IMR-90 (cell line): ENCODE measurements at regions of chr2 and their contacts with region 1.

Region 1: GRCh38 chr2:145157741-145158591 is 638.0 kb upstream of the ZEB2 start:
- DNase-seq: peak; percentile 95
- ATAC-seq: peak; percentile 89
- H3K4me3 ChIP-seq: no peak overlapping the region
- H3K27ac ChIP-seq: peak overlapping the region; percentile 52; the same call in 1 of the 2 replicates
- H3K4me1 ChIP-seq: peaks cover 6% of the 10 kb centered on the region; the same call in 1 of the 2 replicates
- H3K27me3 ChIP-seq: no peaks in the 10 kb centered on the region
- CTCF ChIP-seq: no peak
- POLR2A ChIP-seq: no peak
- RAD21 ChIP-seq: no peak

Region 2: DNA sequence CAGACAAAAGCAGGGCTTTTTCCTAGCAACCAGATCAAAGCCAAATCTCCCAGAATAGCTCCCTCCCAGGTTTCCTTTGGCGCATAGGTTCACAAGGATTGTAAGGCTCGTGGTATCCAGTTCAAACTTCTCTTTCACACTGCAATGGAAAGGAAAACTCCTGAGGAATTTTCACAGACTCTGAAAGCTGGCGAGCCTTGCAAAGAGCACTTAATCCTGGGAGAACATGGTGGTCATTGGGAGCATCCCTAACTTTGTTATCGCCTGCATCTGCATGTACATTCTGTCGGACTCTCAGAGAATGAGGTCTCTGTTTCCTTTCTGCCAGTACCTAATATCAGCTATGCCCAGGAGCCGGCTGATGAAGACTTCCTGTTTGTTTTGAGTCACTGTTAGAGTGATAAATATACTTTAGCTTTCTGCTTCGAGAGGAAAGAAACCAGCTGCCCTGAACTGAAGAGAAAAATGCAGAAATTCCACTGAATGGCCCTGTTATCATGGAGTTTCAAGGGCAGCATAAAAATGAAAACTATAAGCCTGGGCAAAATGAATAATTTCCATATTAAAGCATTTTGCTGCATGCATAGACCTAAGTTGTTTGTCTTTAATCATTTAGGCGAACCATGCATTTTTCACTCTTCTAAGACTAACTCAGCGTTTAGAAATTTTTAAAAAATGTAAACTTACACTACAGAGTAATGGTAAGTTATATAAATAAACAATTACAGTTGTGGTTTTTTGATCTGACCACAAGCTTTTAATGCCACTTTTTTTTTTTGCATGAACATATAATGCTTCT is 561.7 kb before region 1 on chr2:
- CTCF ChIA-PET with region 1: no interaction called
- POLR2A ChIA-PET with region 1: no interaction called
- dilution Hi-C with region 1: no loop called
- in situ Hi-C with region 1: no loop called
- intact Hi-C with region 1: loop called (anchors 2 kb)
- DNase-seq: peak; percentile 69
- ATAC-seq: peak; percentile 90
- H3K4me3 ChIP-seq: peak overlapping the region; percentile 8; the same call in 1 of the 2 replicates
- H3K27ac ChIP-seq: peak overlapping the region; percentile 11; the same call in 1 of the 2 replicates
- H3K4me1 ChIP-seq: peaks cover 4% of the 10 kb centered on the region
- H3K27me3 ChIP-seq: peaks cover 33% of the 10 kb centered on the region
- CTCF ChIP-seq: no peak
- POLR2A ChIP-seq: no peak
- RAD21 ChIP-seq: no peak

Region 3: DNA sequence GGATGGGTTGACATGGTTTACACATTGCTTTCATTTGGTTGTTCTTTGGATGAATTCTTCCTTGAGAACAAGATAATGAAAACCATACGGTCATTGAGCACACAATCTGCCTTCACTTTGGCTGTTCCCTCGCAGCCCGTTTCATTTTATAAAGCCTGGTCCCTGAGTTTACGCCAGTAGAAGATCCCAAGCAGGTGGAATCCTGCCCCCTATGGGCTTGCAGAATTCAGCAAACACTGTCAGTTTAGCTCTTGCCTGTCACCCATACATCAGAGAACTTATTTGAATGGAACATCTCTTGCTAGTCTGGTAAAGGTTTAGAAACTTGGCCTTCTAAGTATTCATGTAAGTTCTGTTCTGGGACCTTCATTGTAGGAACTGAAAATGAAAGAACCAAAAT is 28.3 kb after region 1 on chr2:
- CTCF ChIA-PET with region 1: no interaction called
- POLR2A ChIA-PET with region 1: no interaction called
- dilution Hi-C with region 1: no loop called
- in situ Hi-C with region 1: no loop called
- intact Hi-C with region 1: loop called (anchors 1 kb)
- DNase-seq: peak; percentile 23
- ATAC-seq: no peak
- H3K4me3 ChIP-seq: no peak overlapping the region
- H3K27ac ChIP-seq: no peak overlapping the region
- H3K4me1 ChIP-seq: peaks cover 1% of the 10 kb centered on the region; the same call in 1 of the 2 replicates
- H3K27me3 ChIP-seq: no peaks in the 10 kb centered on the region
- CTCF ChIP-seq: no peak
- POLR2A ChIP-seq: no peak
- RAD21 ChIP-seq: no peak

Region 4: GRCh38 chr2:145546091-145546490 is 388.1 kb after region 1 on chr2:
- CTCF ChIA-PET with region 1: no interaction called
- POLR2A ChIA-PET with region 1: no interaction called
- dilution Hi-C with region 1: no loop called
- in situ Hi-C with region 1: no loop called
- intact Hi-C with region 1: loop called (anchors 10 kb)
- DNase-seq: peak; percentile 76
- ATAC-seq: peak; percentile 94
- H3K4me3 ChIP-seq: no peak overlapping the region
- H3K27ac ChIP-seq: peak overlapping the region; percentile 34; the same call in 1 of the 2 replicates
- H3K4me1 ChIP-seq: peaks cover 2% of the 10 kb centered on the region; the same call in 1 of the 2 replicates
- H3K27me3 ChIP-seq: no peaks in the 10 kb centered on the region
- CTCF ChIP-seq: peak; percentile 44
- POLR2A ChIP-seq: no peak
- RAD21 ChIP-seq: peak; percentile 39

Region 5: DNA sequence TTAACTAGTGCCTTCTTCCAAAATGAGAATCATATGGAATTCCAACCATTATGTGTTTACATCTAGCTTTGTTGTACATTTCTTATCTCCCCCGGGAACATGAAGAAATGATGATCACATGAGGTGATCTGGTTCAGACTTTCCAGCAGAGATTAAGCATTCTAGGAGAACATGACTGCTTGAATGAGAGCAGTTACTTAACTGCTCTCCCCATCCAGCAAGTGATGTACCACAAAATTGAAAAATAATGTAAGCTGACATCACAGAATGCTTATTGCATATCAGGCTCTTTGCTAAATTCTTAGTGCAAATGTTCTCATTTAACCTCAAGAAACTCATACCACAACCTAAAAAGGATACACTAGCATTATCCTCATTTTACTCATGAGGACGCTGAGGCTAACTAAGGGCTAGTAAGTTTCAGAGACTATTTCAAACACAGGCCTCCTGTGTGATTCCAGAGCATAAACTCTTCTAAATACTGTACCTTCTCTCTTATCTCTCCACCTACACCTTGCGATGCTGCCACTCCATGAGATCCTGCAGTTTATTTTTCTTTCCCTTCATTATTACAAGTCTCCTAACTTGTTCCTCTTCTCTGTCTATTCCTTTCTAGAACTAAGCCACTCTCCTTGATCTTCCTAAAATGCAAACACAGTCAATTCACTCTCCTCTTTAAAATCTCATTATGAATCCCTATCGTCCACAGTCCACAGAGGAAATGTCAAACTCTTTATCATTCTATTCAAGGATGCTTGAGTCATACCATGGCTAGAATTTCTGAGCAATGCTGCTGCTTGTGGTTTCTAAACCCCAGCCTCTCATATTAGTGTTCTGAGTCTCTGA is 586.8 kb after region 1 on chr2:
- CTCF ChIA-PET with region 1: no interaction called
- POLR2A ChIA-PET with region 1: no interaction called
- dilution Hi-C with region 1: no loop called
- in situ Hi-C with region 1: no loop called
- intact Hi-C with region 1: loop called (anchors 5 kb)
- DNase-seq: peak; percentile 95
- ATAC-seq: peak; percentile 98
- H3K4me3 ChIP-seq: no peak overlapping the region
- H3K27ac ChIP-seq: no peak overlapping the region
- H3K4me1 ChIP-seq: peaks cover 4% of the 10 kb centered on the region; the same call in 1 of the 2 replicates
- H3K27me3 ChIP-seq: no peaks in the 10 kb centered on the region
- CTCF ChIP-seq: no peak
- POLR2A ChIP-seq: no peak
- RAD21 ChIP-seq: peak; percentile 28